ENCODE measurements at regions of chr11 and their contacts with region 1.

Region 1: DNA sequence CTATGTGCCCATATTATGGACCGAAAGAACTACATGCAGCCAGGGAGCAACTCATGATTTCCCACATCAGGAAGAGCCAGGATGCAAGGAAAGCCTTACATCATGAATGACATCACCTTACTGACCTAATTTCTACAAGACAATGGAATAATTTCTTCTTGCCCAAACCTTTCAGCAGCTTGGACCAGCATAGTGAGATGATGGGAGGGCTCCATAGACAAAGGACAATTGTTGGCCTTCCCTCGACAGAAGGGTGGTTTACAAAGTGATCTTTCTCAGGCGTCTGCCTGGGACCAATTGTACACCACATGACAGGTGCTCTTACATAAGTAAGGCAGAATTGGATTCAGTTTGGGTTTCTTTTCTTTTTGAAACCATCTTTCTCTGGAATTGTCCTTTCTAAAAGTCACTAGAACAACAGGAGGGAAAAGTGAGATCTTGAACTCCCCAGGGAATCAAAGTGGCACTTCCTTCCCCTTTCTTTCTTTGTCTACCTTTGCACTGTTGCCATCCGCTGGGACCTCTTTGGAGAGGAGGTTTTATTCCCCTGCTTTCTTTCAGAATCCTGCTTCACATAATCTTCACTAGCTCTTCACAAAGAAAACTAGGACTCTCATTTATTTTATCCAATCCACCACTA is 51.7 kb upstream of the PAK1 start:
- DNase-seq: peak in 1 of 10 donors; percentile 26
- H3K4me3 ChIP-seq: peak overlapping the region in 3 of 59 donors; percentile 5 to 9 (median 5)
- H3K27ac ChIP-seq: peak overlapping the region in 57 of 59 donors; percentile 2 to 91 (median 72)
- H3K27me3 ChIP-seq: no peaks in the 10 kb centered on the region
- CTCF ChIP-seq: no peak

Region 2: GRCh38 chr11:77473801-77474683 is 51.5 kb before region 1 on chr11 and contains the start of gene PAK1:
- intact Hi-C with region 1: loop called in 1 of 2 experiments (anchors 5 kb)
- DNase-seq: peak; percentile 59 to 91 (median 82)
- H3K4me3 ChIP-seq: peak within 1 kb of the TSS; percentile 56 to 91 (median 81)
- H3K27ac ChIP-seq: peak within 1 kb of the TSS; percentile 29 to 95 (median 86)
- H3K27me3 ChIP-seq: no peaks in the 10 kb centered on the region
- CTCF ChIP-seq: peak in 47 of 56 donors; percentile 12 to 65 (median 39)
- total RNA-seq, gene PAK1: 77.4 to 424 (median 270) TPM

Region 3: GRCh38 chr11:77547863-77548551 is 22.4 kb after region 1 on chr11:
- intact Hi-C with region 1: no loop called
- DNase-seq: peak in 3 of 10 donors; percentile 10 to 48 (median 41)
- H3K4me3 ChIP-seq: peak overlapping the region in 6 of 59 donors; percentile 8 to 28 (median 12)
- H3K27ac ChIP-seq: peak overlapping the region in 40 of 59 donors; percentile 3 to 75 (median 49)
- H3K27me3 ChIP-seq: no peaks in the 10 kb centered on the region
- CTCF ChIP-seq: peak; percentile 58 to 95 (median 80)

Measured in dorsolateral prefrontal cortex (tissue), 120 donors.